Activated B cell treated with CpG ODN at 0.5 μM for 24 hours (primary cell): ENCODE measurements at regions of chr1 and their contacts with region 1.

Region 1: DNA sequence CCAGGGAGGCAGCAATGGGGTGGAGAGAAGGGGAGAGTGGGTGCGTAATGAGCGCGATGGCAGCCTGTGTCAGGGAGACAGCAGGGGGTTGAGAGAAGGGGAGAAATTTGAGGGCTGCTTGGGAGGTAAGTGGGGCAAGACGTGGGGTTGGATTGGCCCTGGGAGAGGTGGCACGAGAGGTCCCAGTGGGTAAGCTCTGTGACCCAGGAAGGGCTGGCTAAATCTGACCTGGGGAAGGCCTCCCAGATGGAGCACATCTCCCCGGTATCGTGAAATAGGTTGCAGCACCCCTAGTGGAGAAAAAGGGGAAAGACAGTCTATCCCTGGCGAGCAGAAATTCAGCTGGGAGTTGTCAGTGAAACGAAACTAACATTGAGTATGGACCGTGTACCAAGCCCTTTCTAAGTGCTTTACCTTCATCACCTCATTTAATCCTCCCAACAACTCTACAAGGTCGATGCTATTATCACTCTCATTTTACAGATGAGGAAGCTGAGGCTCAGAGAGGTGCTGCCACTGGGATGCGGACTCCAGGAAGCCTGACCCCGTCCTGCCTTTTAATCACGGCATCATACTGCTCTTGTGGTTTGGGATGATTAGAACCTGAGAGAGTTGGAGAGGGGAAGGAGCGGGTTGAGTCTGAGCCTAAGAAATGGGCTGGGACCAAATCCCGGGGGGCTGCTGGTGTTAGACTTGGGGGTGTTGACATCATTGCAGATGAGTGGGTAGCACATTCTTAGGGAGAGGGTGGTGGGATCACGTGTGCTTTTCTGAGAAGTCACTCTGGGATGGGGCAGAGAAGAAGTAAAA is 56.6 kb upstream of the RPL11 start:
- DNase-seq: peak; percentile 45
- ATAC-seq: peak; percentile 87
- H3K4me3 Mint-ChIP-seq: peak overlapping the region; percentile 67
- H3K27ac Mint-ChIP-seq: peak overlapping the region; percentile 92
- H3K4me1 Mint-ChIP-seq: peaks cover 51% of the 10 kb centered on the region
- H3K27me3 Mint-ChIP-seq: no peaks in the 10 kb centered on the region
- CTCF ChIP-seq: peak; percentile 69

Region 2: GRCh38 chr1:23496490-23497181 is 138.4 kb before region 1 on chr1:
- CTCF ChIA-PET with region 1: interaction called, 51 read pairs
- POLR2A ChIA-PET with region 1: interaction called, 8 read pairs
- intact Hi-C with region 1: loop called (anchors 1 kb)
- DNase-seq: no peak
- ATAC-seq: no peak
- H3K4me3 Mint-ChIP-seq: no peak overlapping the region
- H3K27ac Mint-ChIP-seq: no peak overlapping the region
- H3K4me1 Mint-ChIP-seq: peaks cover 15% of the 10 kb centered on the region
- H3K27me3 Mint-ChIP-seq: peaks cover 7% of the 10 kb centered on the region
- CTCF ChIP-seq: no peak

Region 3: GRCh38 chr1:23559136-23559984 is 75.7 kb before region 1 on chr1 and contains the start of gene ID3:
- CTCF ChIA-PET with region 1: interaction called, 872 read pairs
- POLR2A ChIA-PET with region 1: interaction called, 441 read pairs
- intact Hi-C with region 1: loop called (anchors 1 kb)
- DNase-seq: peak; percentile 90
- ATAC-seq: peak; percentile 75
- H3K4me3 Mint-ChIP-seq: peak within 1 kb of the TSS; percentile 87
- H3K27ac Mint-ChIP-seq: peak within 1 kb of the TSS; percentile 95
- H3K4me1 Mint-ChIP-seq: peaks cover 80% of the 10 kb centered on the region
- H3K27me3 Mint-ChIP-seq: no peaks in the 10 kb centered on the region
- CTCF ChIP-seq: no peak
- total RNA-seq, gene ID3: 195 and 205 TPM in 2 replicates

Region 4: DNA sequence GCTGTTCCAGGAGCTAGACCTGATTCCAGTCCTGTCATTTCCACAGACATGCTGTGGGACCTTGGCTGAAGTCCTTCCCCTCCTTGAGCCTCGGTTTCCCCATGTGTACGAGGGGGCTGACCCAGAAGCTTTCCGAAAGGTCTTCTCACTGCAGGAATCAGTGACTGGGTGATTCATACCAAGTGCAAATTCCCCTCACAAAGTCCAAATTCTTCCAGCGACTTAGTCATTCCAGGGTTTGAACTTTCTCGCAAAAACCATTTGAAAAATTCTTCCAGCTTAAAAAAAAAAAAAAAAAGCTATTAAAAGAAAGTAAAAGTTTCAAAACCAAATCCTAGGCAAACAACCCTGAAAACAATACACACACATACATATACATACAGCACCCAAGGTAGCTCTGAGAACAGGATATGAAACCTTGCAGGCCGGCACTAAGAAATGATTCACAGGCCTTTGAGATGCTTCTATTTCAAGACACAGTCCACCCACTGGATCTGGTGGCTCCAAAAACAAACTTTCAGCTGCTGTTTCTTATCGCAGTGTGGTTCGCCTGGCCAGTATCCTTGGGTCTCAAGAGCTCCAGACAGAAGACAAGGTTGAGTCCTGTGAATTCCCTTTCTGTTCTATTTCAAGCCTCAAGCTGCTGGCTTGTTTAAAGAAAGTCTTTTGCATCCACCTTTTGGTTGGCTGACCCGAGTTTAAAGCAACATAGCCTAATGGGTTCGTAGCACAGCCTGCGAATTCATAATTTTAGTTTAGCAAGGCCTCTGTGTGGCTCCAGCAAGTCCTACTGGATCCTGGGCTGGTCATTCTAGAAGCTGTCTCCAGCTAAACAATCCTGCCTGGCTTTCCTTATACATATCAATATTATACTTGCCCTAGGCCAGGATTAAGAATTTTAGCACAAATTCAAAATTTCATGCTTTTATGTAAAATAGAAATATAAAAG is 57.7 kb before region 1 on chr1:
- CTCF ChIA-PET with region 1: interaction called, 32 read pairs
- POLR2A ChIA-PET with region 1: interaction called, 18 read pairs
- intact Hi-C with region 1: loop called (anchors 1 kb)
- DNase-seq: no peak
- ATAC-seq: peak; percentile 75
- H3K4me3 Mint-ChIP-seq: peak overlapping the region; percentile 74
- H3K27ac Mint-ChIP-seq: peak overlapping the region; percentile 87
- H3K4me1 Mint-ChIP-seq: peaks cover 86% of the 10 kb centered on the region
- H3K27me3 Mint-ChIP-seq: no peaks in the 10 kb centered on the region
- CTCF ChIP-seq: no peak

Region 5: DNA sequence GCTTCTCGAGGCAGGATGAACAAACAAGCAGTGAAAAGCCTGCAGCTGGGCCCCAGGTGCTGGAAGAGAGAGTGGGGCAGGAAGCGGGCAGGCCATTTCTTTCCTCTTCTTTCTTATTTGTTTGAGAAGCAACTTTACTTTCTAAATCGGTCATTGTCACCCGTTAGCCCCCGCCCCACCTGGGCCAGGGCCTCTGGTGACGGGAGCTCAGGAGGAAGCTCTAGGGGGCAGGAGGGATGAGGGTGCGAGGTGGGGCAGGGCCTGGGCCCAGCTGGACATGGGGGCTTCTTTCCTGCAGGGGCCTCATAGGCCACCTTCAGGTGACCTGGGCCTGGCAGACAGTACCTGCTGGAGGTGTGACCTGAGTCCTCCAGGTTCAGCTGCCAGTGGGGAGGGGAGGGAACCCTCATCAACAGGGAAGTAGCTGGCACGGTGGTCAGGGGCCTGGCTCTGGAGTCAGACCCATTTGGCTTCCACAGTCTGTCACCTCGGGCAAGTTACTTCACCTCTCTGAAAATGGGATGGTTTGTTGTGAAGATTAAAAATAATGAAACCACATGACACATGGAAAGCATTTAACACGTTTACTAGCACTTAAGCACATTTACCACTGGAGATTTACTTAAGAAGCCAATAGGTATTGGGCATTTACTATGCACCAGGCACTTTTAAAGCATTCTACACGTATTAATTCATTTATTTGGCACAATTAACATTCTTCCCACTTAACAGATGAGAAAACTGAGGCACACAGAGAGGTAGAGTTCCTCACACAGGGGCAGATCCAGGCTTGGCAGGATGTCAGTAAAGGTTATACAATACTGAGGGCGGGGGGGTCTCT is 21.6 kb before region 1 on chr1:
- CTCF ChIA-PET with region 1: interaction called, 31 read pairs
- POLR2A ChIA-PET with region 1: interaction called, 19 read pairs
- intact Hi-C with region 1: loop called (anchors 2 kb)
- DNase-seq: peak; percentile 44
- ATAC-seq: peak; percentile 38
- H3K4me3 Mint-ChIP-seq: no peak overlapping the region
- H3K27ac Mint-ChIP-seq: peak overlapping the region; percentile 92
- H3K4me1 Mint-ChIP-seq: peaks cover 85% of the 10 kb centered on the region
- H3K27me3 Mint-ChIP-seq: no peaks in the 10 kb centered on the region
- CTCF ChIP-seq: no peak

Region 6: GRCh38 chr1:23657659-23658275 is 22.7 kb after region 1 on chr1:
- CTCF ChIA-PET with region 1: interaction called, 3 read pairs
- POLR2A ChIA-PET with region 1: interaction called, 13 read pairs
- intact Hi-C with region 1: no loop called
- DNase-seq: peak; percentile 32
- ATAC-seq: peak; percentile 68
- H3K4me3 Mint-ChIP-seq: no peak overlapping the region
- H3K27ac Mint-ChIP-seq: no peak overlapping the region
- H3K4me1 Mint-ChIP-seq: no peaks in the 10 kb centered on the region
- H3K27me3 Mint-ChIP-seq: peaks cover 3% of the 10 kb centered on the region
- CTCF ChIP-seq: no peak

Region 7: DNA sequence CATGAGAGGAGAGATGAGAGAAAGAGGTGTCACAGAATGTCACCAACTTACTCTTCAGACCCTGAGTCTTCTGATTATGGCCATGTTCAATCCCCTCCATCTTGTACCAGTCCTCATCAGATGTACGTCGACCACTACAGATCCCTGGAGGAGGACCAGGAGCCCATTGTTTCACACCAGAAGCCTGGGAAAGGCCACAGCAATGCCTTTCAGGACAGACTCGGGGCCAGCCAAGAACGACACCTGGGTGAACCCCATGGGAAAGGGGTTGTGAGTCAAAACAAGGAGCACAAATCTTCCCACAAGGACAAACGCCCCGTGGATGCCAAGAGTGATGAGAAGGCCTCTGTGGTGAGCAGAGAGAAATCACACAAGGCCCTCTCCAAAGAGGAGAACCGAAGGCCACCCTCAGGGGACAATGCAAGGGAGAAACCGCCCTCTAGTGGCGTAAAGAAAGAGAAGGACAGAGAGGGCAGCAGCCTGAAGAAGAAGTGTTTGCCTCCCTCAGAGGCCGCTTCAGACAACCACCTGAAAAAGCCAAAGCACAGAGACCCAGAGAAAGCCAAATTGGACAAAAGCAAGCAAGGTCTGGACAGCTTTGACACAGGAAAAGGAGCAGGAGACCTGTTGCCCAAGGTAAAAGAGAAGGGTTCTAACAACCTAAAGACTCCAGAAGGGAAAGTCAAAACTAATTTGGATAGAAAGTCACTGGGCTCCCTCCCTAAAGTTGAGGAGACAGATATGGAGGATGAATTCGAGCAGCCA is 116.2 kb after region 1 on chr1:
- CTCF ChIA-PET with region 1: interaction called, 7 read pairs
- POLR2A ChIA-PET with region 1: no interaction called
- intact Hi-C with region 1: loop called (anchors 1 kb)
- DNase-seq: no peak
- ATAC-seq: peak; percentile 84
- H3K4me3 Mint-ChIP-seq: no peak overlapping the region
- H3K27ac Mint-ChIP-seq: peak overlapping the region; percentile 41
- H3K4me1 Mint-ChIP-seq: peaks cover 33% of the 10 kb centered on the region
- H3K27me3 Mint-ChIP-seq: no peaks in the 10 kb centered on the region
- CTCF ChIP-seq: peak; percentile 25